ENCODE measurements at regions of chr5 and their contacts with region 1.

Region 1: GRCh38 chr5:150700594-150701293 is at the start of gene RBM22:
- DNase-seq: peak; percentile 93
- ATAC-seq: peak; percentile 92
- H3K4me3 ChIP-seq: peak within 1 kb of the TSS; percentile 88
- H3K27ac ChIP-seq: peak within 1 kb of the TSS; percentile 52
- H3K4me1 ChIP-seq: peaks cover 17% of the 10 kb centered on the region
- H3K27me3 ChIP-seq: no peaks in the 10 kb centered on the region
- CTCF ChIP-seq: peak; percentile 75
- total RNA-seq, gene RBM22: 27.3 and 31.6 TPM in 2 replicates

Region 2: GRCh38 chr5:149618581-149619251 is 1082.0 kb before region 1 on chr5:
- CTCF ChIA-PET with region 1: no interaction called
- POLR2A ChIA-PET with region 1: no interaction called
- intact Hi-C with region 1: no loop called
- DNase-seq: peak; percentile 91
- ATAC-seq: peak; percentile 88
- H3K4me3 ChIP-seq: no peak overlapping the region
- H3K27ac ChIP-seq: peak overlapping the region; percentile 57
- H3K4me1 ChIP-seq: peaks cover 30% of the 10 kb centered on the region
- H3K27me3 ChIP-seq: no peaks in the 10 kb centered on the region
- CTCF ChIP-seq: peak; percentile 99

Region 3: GRCh38 chr5:150410524-150411244 is 290.1 kb before region 1 on chr5:
- CTCF ChIA-PET with region 1: no interaction called
- POLR2A ChIA-PET with region 1: interaction called, 13 read pairs
- intact Hi-C with region 1: no loop called
- DNase-seq: peak; percentile 64
- ATAC-seq: peak; percentile 67
- H3K4me3 ChIP-seq: no peak overlapping the region
- H3K27ac ChIP-seq: no peak overlapping the region
- H3K4me1 ChIP-seq: no peaks in the 10 kb centered on the region; the same call in 1 of the 2 replicates
- H3K27me3 ChIP-seq: no peaks in the 10 kb centered on the region
- CTCF ChIP-seq: no peak

Region 4: DNA sequence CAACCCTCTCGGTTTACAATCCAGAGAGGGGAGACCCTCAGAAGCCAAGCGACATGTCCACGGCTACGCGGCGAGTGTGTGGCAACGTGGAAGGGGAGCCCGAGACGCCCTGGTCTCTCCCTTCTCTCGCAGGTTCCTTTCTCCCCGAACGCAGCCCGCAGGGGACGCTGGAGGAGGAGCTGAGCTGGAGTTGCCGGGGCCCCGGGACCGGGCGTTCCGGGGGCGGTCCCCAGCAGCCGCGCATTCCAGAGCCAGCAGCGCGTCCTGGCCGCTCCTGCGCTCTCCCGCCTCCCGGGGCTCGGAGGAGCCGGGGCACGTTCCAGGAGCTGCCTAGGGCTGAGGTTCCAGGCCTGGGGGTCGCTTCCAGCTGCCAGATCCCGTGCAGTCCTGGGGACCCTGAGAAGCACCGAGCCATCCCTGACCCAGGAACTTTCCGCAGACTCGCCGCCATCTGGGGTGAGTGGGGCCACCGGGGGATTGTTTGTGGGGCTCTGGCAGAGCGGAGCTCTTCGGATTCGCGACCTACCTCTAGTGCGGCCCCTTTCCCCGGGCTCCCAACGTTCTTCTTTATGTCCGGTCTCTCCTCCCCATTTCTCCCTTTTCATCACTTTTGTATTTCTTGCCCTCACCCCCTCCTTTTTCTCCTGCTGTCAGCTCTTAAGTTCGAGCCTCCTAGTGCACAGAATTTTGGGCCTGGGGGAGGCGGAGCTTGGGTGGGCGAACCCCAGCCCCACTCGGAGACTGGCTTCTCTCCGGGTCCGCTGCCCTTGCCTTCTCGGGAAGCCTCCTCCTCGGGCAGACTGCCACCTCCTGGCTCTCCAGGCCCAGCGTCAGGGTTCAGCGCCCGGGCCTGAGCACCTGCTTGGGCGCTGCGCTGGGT is 78.0 kb after region 1 on chr5 and contains the start of gene SMIM3:
- CTCF ChIA-PET with region 1: no interaction called
- POLR2A ChIA-PET with region 1: interaction called, 5 read pairs
- intact Hi-C with region 1: loop called (anchors 2 kb)
- DNase-seq: peak; percentile 72
- ATAC-seq: peak; percentile 76
- H3K4me3 ChIP-seq: peak within 1 kb of the TSS; percentile 91
- H3K27ac ChIP-seq: no peak within 1 kb of the TSS
- H3K4me1 ChIP-seq: peaks cover 59% of the 10 kb centered on the region
- H3K27me3 ChIP-seq: no peaks in the 10 kb centered on the region
- CTCF ChIP-seq: peak; percentile 63
- total RNA-seq, gene SMIM3: 11.3 and 15.6 TPM in 2 replicates

Region 5: DNA sequence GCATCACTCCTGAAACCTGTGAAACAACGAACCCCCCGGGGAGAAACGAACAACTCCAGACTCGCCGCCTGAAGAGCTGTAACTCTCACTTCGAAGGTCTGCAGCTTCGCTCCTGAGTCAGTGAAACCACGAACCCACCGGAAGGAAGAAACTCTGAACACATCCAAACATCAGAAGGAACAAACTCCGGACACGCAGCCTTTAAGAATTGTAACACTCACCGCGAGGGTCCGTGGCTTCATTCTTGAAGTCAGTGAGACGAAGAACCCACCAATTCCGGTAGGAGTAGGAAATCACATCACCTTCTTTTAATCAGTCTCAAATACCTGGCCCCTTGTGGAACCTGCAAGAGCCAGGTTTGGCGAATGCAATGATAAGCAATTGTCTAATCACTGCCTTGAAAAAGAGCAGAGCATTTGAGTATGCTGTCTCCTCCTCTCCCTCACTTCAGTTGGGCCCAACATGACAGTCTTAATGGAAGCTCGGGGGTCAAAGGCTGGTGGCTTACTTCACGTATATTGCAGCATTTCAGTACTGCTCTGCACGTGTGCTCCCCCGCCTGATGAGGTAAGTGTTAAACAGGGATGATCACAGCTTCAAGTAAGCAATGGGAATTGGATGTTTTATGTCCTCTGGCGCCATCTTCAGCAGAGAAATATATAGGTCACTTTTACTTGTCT is 146.1 kb after region 1 on chr5:
- CTCF ChIA-PET with region 1: interaction called, 4 read pairs
- POLR2A ChIA-PET with region 1: no interaction called
- intact Hi-C with region 1: loop called (anchors 2 kb)
- DNase-seq: peak; percentile 79
- ATAC-seq: peak; percentile 91
- H3K4me3 ChIP-seq: no peak overlapping the region
- H3K27ac ChIP-seq: no peak overlapping the region
- H3K4me1 ChIP-seq: no peaks in the 10 kb centered on the region
- H3K27me3 ChIP-seq: no peaks in the 10 kb centered on the region
- CTCF ChIP-seq: peak; percentile 87

Region 6: GRCh38 chr5:151252762-151253604 is 552.2 kb after region 1 on chr5 and contains the start of gene GM2A:
- CTCF ChIA-PET with region 1: no interaction called
- POLR2A ChIA-PET with region 1: interaction called, 15 read pairs
- intact Hi-C with region 1: no loop called
- DNase-seq: peak; percentile 99
- ATAC-seq: peak; percentile 94
- H3K4me3 ChIP-seq: peak within 1 kb of the TSS; percentile 95
- H3K27ac ChIP-seq: peak within 1 kb of the TSS; percentile 25
- H3K4me1 ChIP-seq: peaks cover 32% of the 10 kb centered on the region
- H3K27me3 ChIP-seq: no peaks in the 10 kb centered on the region
- CTCF ChIP-seq: no peak
- total RNA-seq, gene GM2A: 78.3 and 90.2 TPM in 2 replicates